Tibial artery (tissue), 4 donors: ENCODE measurements at regions of chr19 and their contacts with region 1.

Region 1: DNA sequence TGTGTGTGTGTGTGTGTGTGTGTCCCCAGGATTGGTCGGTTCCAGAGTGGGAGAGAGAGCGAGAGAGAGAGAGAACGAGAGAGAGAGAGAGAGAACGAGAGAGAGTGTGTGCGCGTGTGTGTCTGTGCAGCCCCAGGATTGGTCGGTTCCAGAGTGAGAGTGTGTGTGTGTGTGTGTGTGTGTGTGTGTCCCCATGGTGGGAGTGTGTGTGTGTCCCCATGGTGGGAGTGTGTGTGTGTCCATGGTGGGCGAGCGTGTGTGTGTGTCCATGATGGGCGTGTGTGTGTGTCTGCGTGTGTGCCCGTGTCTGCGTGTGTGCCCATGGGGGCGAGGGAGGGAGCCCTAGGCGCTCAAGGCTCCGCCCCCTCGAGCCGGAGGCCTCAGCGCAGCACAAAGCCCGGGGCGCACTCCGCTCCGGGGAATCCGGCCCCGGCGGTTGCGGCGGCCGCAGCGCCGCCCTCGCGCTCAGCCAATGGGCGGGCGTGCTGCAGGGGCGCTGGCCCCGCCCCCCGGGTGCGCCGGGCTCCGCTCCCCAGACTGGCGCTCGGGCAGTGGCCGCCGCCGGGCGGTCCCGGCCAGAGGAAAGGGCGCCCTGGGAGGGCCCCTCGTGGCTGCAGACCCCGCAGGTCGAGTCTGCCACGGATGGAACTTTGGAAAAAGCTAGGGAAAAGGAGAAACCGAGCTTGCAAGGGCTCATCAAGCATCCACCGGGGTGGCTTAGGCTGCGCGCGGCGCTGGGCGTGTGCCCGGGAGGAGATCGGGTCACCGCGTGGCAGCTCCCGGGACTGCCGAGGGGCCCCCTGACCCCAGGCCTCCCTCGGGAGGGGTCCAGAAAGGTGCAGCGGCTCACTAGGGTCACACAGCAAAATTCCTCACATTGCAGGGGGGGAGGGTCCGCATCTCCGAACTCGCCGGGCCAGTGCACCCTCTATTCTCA is 96.2 kb downstream of the INSR start:
- DNase-seq: peak; percentile 93 to 97
- H3K4me3 ChIP-seq: peak overlapping the region; percentile 67 to 75
- H3K27ac ChIP-seq: peak overlapping the region; percentile 91 to 96
- H3K4me1 ChIP-seq: peaks cover 0 to 22% (median 10%) of the 10 kb centered on the region in 4 donors
- H3K27me3 ChIP-seq: no peaks in the 10 kb centered on the region
- CTCF ChIP-seq: peak; percentile 24 to 39

Region 2: GRCh38 chr19:7145494-7146485 is 52.2 kb before region 1 on chr19:
- intact Hi-C with region 1: no loop called
- DNase-seq: no peak
- H3K4me3 ChIP-seq: no peak overlapping the region
- H3K27ac ChIP-seq: no peak overlapping the region
- H3K4me1 ChIP-seq: no peaks in the 10 kb centered on the region
- H3K27me3 ChIP-seq: no peaks in the 10 kb centered on the region
- CTCF ChIP-seq: no peak

Region 3: DNA sequence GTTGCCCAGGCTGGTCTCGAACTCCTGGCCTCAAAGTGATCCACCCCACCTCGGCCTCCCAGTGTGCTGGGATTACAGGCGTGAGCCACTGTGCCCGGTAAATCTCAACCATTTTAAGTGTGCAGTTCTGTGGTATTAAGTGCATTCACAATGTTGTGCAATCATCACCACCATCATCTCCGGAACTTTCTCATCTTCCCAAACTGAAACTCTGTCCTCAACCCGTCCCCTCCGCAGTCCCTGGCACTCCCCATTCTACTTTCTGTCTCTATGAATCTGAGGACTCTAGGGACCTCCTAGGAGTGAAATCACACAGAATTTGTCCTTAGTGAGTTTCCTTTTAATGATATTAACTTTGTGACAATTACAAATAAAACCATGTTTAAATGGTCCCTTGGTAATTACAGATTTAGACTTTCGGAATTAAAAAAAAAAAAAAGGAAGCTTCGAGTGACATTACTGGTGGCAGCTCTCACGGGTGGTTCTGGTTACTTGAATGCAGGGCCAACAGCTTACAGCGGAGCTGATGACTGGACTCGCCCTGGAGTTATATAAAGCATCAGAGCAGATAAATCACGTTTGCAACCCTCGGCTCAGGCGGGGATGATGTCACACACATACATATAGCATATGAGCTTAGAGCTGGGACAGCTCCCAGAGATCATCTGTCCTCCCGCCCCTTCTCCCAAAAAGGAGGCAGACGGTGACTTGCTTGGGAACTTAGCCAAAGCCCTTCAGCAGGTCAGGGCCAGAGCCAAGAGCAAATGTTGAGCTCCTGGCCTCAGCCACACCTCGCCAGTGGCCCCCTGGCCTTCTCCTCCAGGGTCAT is 38.7 kb before region 1 on chr19:
- intact Hi-C with region 1: loop called (anchors 5 kb)
- DNase-seq: peak; percentile 81 to 94
- H3K4me3 ChIP-seq: peak overlapping the region; percentile 9 to 25
- H3K27ac ChIP-seq: peak overlapping the region; percentile 82 to 84
- H3K4me1 ChIP-seq: peaks cover 0 to 33% (median 9%) of the 10 kb centered on the region in 4 donors
- H3K27me3 ChIP-seq: no peaks in the 10 kb centered on the region
- CTCF ChIP-seq: no peak

Region 4: DNA sequence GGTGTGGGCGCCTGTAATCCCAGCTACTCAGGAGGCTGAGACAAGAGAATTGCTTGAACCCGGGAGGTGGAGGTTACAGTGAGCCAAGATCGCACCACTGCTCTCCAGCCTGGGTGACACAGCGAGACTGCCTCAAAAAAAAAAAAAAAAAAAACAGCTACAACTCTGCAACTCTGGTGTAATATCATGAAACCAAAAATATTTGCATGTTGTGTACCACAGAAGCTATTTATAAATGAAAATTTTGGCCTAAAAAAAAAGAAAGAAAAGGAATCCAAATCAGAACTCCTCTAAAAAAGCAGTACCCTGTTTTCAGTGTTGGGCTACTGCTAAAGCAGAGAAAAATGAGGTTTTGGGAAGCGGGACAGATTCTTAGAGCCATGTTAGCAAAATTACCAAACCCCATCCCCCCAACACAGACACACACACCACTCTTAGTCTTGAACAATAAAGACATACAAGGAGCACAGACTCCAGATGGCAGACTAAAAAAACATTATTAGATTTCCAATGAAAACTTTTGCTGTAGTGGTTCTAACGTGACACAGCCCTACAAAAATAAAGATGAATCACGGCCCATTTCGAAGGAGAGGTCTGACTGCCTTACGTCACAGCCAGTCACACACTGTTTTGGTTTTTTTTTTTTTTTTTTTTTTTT is 44.7 kb after region 1 on chr19:
- intact Hi-C with region 1: loop called (anchors 5 kb)
- DNase-seq: peak in 1 of 2 donors; percentile 38
- H3K4me3 ChIP-seq: peak overlapping the region in 1 of 2 donors; percentile 20
- H3K27ac ChIP-seq: peak overlapping the region; percentile 83 to 85
- H3K4me1 ChIP-seq: peaks cover 0 to 58% (median 34%) of the 10 kb centered on the region in 4 donors
- H3K27me3 ChIP-seq: no peaks in the 10 kb centered on the region
- CTCF ChIP-seq: peak in 1 of 2 experiments; percentile 4

Region 5: DNA sequence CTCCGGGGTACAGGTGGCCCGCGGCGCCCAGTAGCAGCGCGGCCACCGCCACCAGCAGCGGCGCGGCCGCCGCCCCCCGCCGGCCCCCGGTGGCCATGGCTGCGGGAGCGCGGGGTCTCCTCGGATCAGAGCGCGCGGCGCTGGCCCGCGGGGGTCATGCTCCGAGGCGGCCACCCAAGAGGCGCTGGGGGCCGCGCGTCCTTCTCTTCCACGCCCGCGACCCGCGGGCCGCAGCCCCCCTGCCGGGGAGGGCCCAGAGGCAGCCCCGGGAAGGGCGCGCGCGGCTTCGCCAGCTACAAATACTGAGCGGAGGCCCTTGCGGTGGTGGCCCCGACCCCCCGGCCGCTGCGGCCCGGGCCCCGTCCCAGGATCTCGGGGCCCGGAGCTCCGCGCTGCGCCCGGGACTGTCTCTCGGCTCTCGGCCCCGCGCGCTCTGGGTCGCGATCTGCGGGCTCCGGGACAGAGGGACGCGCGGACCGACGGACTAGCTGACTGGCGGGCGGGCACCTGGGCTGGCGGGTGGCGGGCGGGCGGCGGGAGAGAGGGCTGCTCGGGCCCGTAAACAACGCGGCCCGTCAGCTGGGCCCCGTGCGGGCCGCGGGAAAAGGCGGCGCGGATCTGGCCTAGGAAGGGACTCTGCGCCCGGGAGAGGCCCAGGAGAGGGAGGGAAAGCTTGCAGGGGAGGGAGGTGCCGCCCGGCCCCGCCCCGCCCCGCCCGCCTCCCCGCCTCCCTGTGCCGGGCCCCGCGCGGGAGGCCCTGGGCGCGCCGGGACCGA is 96.0 kb after region 1 on chr19 and contains the start of gene INSR:
- intact Hi-C with region 1: loop called (anchors 1 kb)
- DNase-seq: peak; percentile 87 to 97
- H3K4me3 ChIP-seq: peak within 1 kb of the TSS; percentile 99 to 100
- H3K27ac ChIP-seq: peak within 1 kb of the TSS; percentile 96 to 99
- H3K4me1 ChIP-seq: peaks cover 0 to 39% (median 19%) of the 10 kb centered on the region in 4 donors
- H3K27me3 ChIP-seq: no peaks in the 10 kb centered on the region
- CTCF ChIP-seq: no peak